GM18951 (cell line): ENCODE measurements at regions of chr5 and their contacts with region 1.

Region 1: DNA sequence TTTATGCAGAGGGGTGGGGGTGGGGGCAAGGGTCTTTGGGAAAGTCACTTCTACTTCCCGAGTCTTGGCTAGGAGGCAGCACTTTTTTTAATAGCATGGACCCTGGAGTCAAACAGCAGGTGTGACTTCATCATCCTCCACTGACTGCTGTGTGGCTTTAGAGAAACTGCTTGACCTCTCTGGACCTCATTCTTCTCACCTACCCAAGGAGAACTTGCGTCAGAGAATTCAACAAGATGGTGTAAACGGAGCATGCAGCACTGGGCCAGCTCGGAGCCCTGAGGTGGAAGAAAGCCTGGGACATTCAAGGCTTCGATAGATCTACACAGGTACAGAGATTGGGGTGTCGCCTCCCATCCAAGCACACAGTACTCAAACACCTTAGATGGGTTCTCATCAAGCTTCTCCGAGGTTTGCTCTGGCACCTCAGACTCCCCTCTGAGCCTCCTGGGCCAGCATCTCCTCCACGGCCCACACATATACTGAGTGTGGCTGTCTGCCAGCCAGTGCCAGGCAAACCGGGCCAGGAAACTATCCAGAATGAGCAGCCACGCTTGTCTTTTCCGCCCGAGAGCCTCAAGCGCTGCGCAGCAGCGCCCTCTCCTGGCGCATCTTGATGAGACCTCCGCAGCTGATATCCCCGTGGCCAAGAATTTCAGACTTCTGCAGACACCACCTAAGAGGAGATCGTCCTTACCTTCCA is 4.6 kb upstream of the SLC25A48 start:
- POLR2A ChIP-seq: no peak

Region 2: DNA sequence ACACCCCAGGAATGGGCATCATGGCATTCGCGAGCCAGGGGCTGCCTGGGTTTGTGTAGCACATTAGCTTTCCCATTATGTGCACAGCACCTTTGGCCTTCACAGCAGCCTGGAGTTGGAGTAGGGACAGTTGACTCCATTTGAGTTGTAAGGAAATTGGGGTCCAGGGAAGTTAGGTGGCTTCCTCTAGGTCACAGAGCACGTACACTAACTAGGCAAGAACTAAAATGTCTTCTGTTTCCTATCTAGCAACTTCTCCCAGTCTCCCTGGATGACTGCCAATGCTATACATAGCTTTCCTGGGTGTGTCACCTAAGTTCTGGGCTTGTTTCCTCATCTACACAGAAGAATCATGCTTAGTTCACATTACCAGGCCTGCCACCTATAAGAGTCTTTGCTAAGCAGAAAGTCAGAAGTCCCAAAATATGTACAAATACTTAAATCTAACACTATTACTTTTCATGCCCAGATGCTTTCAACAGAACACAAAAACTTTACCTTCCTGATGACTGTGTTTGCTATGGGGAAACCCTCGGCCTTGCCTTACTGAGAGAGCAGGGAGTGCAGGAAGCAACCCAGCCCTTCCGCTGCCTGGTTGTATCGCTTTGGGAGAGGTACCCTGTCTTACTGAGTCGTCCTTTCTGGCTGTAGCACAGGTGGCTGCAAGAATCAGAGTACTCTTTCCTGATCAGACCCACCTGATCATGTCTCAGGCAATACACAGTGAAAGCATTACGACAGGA is 442.8 kb before region 1 on chr5:
- in situ Hi-C with region 1: no loop called
- POLR2A ChIP-seq: no peak

Region 3: GRCh38 chr5:135560858-135561257 is 269.0 kb before region 1 on chr5:
- in situ Hi-C with region 1: loop called (anchors 25 kb)
- POLR2A ChIP-seq: no peak

Region 4: GRCh38 chr5:136037001-136037705 is 207.3 kb after region 1 on chr5:
- in situ Hi-C with region 1: no loop called
- POLR2A ChIP-seq: no peak